ENCODE measurements at regions of chr3 and their contacts with region 1.

Region 1: GRCh38 chr3:112097378-112097777 is 11.2 kb downstream of the C3orf52 start:
- DNase-seq: peak; percentile 99
- H3K4me3 ChIP-seq: no peak overlapping the region
- H3K27ac ChIP-seq: peak overlapping the region; percentile 70
- H3K4me1 ChIP-seq: peaks cover 37% of the 10 kb centered on the region
- H3K27me3 ChIP-seq: no peaks in the 10 kb centered on the region
- CTCF ChIP-seq: no peak

Region 2: GRCh38 chr3:111509310-111509709 is 588.1 kb before region 1 on chr3:
- CTCF ChIA-PET with region 1: no interaction called
- dilution Hi-C with region 1: no loop called
- in situ Hi-C with region 1: no loop called
- intact Hi-C with region 1: no loop called
- DNase-seq: peak; percentile 84
- H3K4me3 ChIP-seq: no peak overlapping the region
- H3K27ac ChIP-seq: no peak overlapping the region
- H3K4me1 ChIP-seq: no peaks in the 10 kb centered on the region
- H3K27me3 ChIP-seq: no peaks in the 10 kb centered on the region
- CTCF ChIP-seq: no peak

Region 3: GRCh38 chr3:112074721-112075497 is 22.5 kb before region 1 on chr3:
- CTCF ChIA-PET with region 1: no interaction called
- dilution Hi-C with region 1: no loop called
- in situ Hi-C with region 1: no loop called
- intact Hi-C with region 1: loop called (anchors 1 kb)
- DNase-seq: peak; percentile 100
- H3K4me3 ChIP-seq: peak overlapping the region in 2 of 3 experiments; percentile 12 to 19
- H3K27ac ChIP-seq: peak overlapping the region; percentile 100
- H3K4me1 ChIP-seq: peaks cover 20% of the 10 kb centered on the region
- H3K27me3 ChIP-seq: no peaks in the 10 kb centered on the region
- CTCF ChIP-seq: no peak